MCF 10A (cell line): ENCODE measurements at regions of chr11 and their contacts with region 1.

Region 1: GRCh38 chr11:13335319-13335718 is 57.7 kb downstream of the BMAL1 start:
- DNase-seq: peak; percentile 88
- H3K4me3 Mint-ChIP-seq: no peak overlapping the region
- H3K27ac Mint-ChIP-seq: peak overlapping the region; percentile 20
- H3K4me1 Mint-ChIP-seq: peaks cover 62% of the 10 kb centered on the region
- H3K27me3 Mint-ChIP-seq: no peaks in the 10 kb centered on the region
- CTCF ChIP-seq: peak; percentile 73

Region 2: DNA sequence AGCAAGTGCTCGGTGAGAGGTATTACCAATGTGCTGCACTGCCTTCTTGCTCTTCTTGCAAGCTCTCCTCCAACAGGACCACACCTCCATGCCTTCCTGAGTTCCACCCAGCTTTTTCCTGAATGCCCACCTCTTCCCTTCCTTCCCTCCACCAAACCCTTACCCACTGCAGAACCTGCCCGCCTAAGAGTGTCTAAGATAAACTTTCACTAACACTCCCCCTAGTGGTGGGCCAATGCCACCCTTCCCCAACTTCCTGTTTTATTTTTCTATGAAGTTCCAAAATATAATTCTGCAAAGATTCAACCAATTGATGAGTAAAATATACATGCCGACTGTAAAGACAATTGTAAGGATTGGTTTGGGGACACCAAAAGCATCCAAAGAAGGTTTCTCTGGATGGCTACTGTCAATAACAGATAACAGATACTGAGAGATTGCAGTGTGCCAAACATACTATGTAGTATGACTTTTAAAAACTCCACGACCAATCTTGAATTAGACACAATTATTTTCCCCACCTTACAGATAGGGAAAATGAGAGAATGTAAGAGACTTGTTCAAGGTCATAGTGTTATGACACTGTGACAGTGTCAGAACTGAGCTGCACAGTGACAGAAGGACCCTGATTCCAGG is 96.3 kb before region 1 on chr11:
- CTCF ChIA-PET with region 1: interaction called, 11 read pairs
- POLR2A ChIA-PET with region 1: interaction called, 3 read pairs
- intact Hi-C with region 1: no loop called
- DNase-seq: peak; percentile 72
- H3K4me3 Mint-ChIP-seq: no peak overlapping the region
- H3K27ac Mint-ChIP-seq: no peak overlapping the region
- H3K4me1 Mint-ChIP-seq: peaks cover 6% of the 10 kb centered on the region
- H3K27me3 Mint-ChIP-seq: no peaks in the 10 kb centered on the region
- CTCF ChIP-seq: peak; percentile 68

Region 3: GRCh38 chr11:13276832-13277767 is 58.2 kb before region 1 on chr11:
- CTCF ChIA-PET with region 1: interaction called, 31 read pairs
- POLR2A ChIA-PET with region 1: interaction called, 106 read pairs
- intact Hi-C with region 1: loop called (anchors 2 kb)
- DNase-seq: peak; percentile 98
- H3K4me3 Mint-ChIP-seq: peak overlapping the region; percentile 91
- H3K27ac Mint-ChIP-seq: no peak overlapping the region
- H3K4me1 Mint-ChIP-seq: peaks cover 31% of the 10 kb centered on the region
- H3K27me3 Mint-ChIP-seq: no peaks in the 10 kb centered on the region
- CTCF ChIP-seq: no peak

Region 4: DNA sequence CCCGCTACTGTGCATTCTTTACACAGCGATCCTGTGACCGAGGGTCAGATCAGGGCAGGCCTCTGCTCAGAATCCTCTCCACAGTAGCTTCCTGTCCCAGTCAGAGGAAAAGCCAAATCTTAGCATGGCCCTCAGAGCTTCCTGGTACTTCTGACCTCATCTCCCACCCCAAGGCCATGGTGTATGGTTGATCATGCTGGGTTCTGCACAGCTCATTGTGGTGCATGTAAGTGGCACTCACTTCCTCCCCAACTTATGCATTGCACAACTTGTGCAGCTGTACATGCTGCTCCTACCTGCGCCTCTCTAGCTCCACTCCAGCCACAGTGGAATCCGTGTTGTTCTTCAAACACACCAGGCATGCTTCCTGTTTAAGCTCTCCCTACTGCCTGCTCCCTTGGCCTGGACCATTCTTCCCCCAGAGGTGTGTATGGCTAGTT is 37.4 kb before region 1 on chr11:
- CTCF ChIA-PET with region 1: interaction called, 18 read pairs
- POLR2A ChIA-PET with region 1: interaction called, 3 read pairs
- intact Hi-C with region 1: no loop called
- DNase-seq: peak; percentile 52
- H3K4me3 Mint-ChIP-seq: no peak overlapping the region
- H3K27ac Mint-ChIP-seq: no peak overlapping the region
- H3K4me1 Mint-ChIP-seq: peaks cover 31% of the 10 kb centered on the region
- H3K27me3 Mint-ChIP-seq: no peaks in the 10 kb centered on the region
- CTCF ChIP-seq: no peak